Sciatic nerve (tissue), 2 donors: ENCODE measurements at regions of chr10 and their contacts with region 1.

Region 1: DNA sequence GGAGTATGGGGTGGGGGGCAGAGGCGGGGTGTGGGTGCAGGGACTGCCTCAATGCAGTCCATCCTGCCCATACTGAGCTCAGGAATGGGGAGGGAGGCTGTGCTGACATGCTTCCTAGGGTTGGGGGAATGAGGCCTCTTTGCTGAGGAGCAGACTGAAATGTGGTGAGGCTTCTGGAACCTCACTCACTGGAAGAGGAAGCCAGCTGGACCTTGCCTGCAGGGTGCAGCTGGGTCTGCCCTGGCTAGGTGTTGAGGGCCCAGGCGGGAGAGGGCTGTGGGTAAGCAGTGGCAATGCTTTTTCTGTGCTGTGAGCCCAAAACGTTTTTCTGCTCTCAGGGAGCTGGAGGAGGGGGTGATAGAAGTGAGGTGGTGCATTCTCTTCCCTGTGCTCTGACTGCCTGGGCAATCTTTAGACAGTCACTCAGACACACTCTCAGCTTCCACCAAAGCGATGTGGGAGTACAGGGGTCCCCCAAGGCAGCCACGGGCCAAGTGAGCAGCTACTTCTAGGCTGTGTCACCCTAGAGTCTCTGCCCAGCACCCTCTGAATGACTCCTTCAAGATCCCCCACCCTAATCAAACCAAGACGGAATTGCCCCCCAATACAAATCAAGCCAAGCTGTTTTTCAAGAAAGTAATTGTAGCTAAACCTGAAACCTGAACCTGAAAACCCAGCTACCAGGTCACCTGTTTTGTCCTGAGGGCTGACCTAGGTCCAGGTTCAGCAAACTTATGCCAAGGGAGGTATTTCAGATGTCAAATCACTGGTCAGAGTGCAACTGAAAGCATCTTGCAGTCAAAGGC is 41.1 kb upstream of the BMPR1A start:
- DNase-seq: peak; percentile 17
- ATAC-seq: no peak

Region 2: DNA sequence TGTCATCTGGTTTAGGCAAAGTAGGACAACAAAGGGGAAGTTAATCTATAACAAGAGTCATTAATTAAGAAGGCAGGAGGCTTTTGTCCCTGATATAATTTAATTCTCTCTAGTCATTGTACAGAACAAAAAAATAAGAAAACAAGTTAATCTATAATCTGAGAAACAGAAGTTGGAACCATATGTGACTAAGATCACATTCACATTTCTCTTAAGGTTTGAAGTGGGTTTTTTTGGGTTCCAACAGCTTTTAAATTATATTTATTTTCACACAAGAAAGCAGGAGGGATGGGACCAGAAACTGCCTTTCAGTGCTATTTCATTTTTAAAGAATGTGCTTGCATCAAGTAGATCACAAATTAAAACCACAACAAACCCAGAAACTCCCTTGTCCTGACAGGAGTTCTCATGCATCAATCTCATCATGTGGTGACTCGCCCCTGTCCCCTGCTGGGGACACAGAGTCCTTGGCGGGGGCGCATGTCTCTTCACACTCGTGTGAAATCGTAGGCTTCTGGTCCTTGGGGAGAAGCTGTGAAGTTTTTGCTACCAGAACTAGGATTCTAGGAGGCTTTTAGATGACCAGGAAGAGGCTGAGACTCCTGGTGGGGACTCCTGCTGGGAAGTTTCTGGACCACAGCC is 71.1 kb before region 1 on chr10:
- intact Hi-C with region 1: no loop called
- DNase-seq: no peak
- ATAC-seq: no peak

Region 3: DNA sequence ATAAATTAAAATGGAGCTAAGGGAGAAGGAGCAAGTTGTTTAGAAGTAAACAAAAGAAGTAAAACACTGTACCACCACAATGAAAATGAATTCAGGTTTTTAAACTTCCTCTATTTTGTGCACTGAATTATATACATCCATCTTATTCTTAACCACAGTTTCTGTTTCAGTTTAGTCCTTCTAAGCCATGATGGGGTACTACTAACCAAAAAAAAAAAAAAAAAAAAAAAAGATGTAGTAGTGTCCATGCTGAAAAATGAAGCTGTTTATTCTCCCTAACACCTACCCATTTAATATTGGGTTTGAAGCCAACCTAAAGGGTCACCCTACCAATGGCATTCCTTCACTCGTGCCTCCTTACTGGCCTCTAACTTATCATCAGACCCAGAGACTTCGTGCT is 37.7 kb after region 1 on chr10:
- intact Hi-C with region 1: loop called (anchors 5 kb)
- DNase-seq: no peak
- ATAC-seq: no peak